ENCODE measurements at regions of chr7 and their contacts with region 1.

Region 1: DNA sequence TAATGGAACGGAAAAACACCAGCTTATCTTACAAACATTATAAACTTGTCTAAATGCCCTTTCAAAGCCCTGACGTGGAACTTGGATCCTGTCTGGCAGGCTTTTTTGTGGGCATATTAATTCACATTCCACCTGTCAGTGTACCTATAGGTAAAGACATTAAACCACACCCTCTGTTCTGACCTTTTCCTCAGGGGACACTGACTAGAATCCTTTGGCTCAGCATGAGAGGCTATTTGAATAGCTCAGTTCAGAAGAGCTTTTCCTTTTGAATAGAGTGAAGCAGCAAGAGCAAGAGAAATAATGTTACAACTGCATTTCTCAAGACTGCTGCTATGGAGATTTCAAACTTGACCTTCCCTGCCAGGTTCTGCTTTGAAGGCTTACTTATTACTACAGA is 76.9 kb downstream of the CYP51A1 start:
- DNase-seq: no peak
- ATAC-seq: peak in 3 of 4 donors; percentile 61 to 66 (median 64)
- H3K4me3 ChIP-seq: peak overlapping the region in 1 of 12 donors; percentile 31
- H3K27ac ChIP-seq: peak overlapping the region in 10 of 12 donors; percentile 22 to 62 (median 46)
- H3K4me1 ChIP-seq: peaks cover 0 to 21% (median 7%) of the 10 kb centered on the region in 12 donors
- H3K27me3 ChIP-seq: no peaks in the 10 kb centered on the region
- CTCF ChIP-seq: no peak
- POLR2A ChIP-seq: no peak

Region 2: DNA sequence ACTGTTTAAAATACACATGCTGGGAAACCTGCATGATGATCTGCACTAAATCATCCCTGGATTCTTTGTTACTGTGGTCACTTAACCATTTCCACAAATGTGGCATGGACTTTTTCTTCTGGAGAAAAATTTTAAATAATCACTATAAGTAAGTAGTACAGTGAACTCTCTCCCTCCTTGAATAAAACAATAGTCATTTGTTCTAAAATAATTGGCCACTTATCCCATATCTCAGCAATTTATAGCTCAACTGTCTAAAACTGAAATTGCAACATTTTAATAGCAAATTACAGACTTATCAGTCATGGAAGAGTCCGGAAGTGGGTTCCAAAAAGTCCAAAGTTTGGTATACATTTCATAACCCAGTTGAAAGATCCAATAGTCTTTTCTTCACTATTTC is 267.8 kb before region 1 on chr7:
- intact Hi-C with region 1: no loop called
- DNase-seq: no peak
- ATAC-seq: no peak
- H3K4me3 ChIP-seq: no peak overlapping the region
- H3K27ac ChIP-seq: no peak overlapping the region
- H3K4me1 ChIP-seq: no peaks in the 10 kb centered on the region
- H3K27me3 ChIP-seq: no peaks in the 10 kb centered on the region
- CTCF ChIP-seq: no peak
- POLR2A ChIP-seq: no peak

Region 3: GRCh38 chr7:91953618-91954017 is 103.7 kb before region 1 on chr7:
- intact Hi-C with region 1: loop called in 1 of 10 experiments (anchors 10 kb)
- DNase-seq: no peak
- ATAC-seq: no peak
- H3K4me3 ChIP-seq: no peak overlapping the region
- H3K27ac ChIP-seq: no peak overlapping the region
- H3K4me1 ChIP-seq: peaks cover 0 to 31% (median 14%) of the 10 kb centered on the region in 12 donors
- H3K27me3 ChIP-seq: no peaks in the 10 kb centered on the region
- CTCF ChIP-seq: peak in 4 of 12 donors; percentile 14 to 20 (median 18)
- POLR2A ChIP-seq: no peak

Region 4: GRCh38 chr7:92002720-92003119 is 54.6 kb before region 1 on chr7:
- intact Hi-C with region 1: loop called in 1 of 10 experiments (anchors 10 kb)
- DNase-seq: no peak
- ATAC-seq: no peak
- H3K4me3 ChIP-seq: no peak overlapping the region
- H3K27ac ChIP-seq: no peak overlapping the region
- H3K4me1 ChIP-seq: peaks cover 0 to 15% (median 0%) of the 10 kb centered on the region in 12 donors
- H3K27me3 ChIP-seq: no peaks in the 10 kb centered on the region
- CTCF ChIP-seq: no peak
- POLR2A ChIP-seq: no peak